ENCODE measurements at regions of chr20 and their contacts with region 1.

Region 1: DNA sequence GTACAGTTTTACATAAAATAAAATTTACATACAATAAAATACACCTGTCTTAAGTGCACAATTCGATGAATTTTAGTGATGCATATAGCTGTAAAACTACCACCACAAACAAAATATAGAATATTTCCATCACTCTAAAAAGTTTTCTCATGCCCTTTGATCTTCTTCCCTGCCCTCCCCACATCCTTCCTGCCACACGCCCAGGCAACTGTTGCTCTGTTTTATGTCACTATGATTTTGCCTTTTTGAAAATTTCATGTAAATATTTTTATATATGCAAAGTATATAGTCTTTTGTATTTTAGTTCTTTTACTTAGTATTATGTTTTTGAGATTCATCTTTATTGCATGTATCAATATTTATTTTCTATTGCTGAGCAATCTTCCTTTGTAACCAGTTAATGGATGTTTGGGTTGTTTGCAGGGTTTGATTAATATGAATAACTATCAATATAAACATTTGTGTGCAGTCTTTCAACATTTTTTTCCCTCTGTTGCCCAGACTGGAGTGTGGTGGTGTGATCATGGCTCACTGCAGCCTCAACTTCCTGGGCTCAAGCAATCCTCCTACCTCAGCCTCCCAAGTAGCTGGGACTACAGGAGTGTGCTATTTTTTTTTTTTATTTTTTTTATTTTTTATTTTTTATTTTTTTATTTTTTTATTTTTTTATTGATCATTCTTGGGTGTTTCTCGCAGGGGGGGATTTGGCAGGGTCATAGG is 23.8 kb upstream of the SAMHD1 start:
- DNase-seq: peak; percentile 32 to 89 (median 60)
- ATAC-seq: peak; percentile 83
- H3K4me3 ChIP-seq: peak overlapping the region; percentile 5
- H3K4me3 Mint-ChIP-seq: peak overlapping the region; percentile 30
- H3K27ac ChIP-seq: peak overlapping the region; percentile 56 to 59
- H3K27ac Mint-ChIP-seq: peak overlapping the region; percentile 79
- H3K4me1 ChIP-seq: peaks cover 51% of the 10 kb centered on the region
- H3K4me1 Mint-ChIP-seq: peaks cover 38% of the 10 kb centered on the region
- H3K27me3 ChIP-seq: no peaks in the 10 kb centered on the region
- H3K27me3 Mint-ChIP-seq: no peaks in the 10 kb centered on the region
- CTCF ChIP-seq: no peak

Region 2: GRCh38 chr20:36745927-36746659 is 229.2 kb before region 1 on chr20 and contains the start of gene NDRG3:
- CTCF ChIA-PET with region 1: no interaction called
- POLR2A ChIA-PET with region 1: no interaction called
- intact Hi-C with region 1: no loop called
- DNase-seq: peak; percentile 84 to 97 (median 91)
- ATAC-seq: peak; percentile 98
- H3K4me3 ChIP-seq: peak within 1 kb of the TSS; percentile 92
- H3K4me3 Mint-ChIP-seq: peak within 1 kb of the TSS; percentile 90
- H3K27ac ChIP-seq: peak within 1 kb of the TSS in 1 of 2 donors; percentile 49
- H3K27ac Mint-ChIP-seq: peak within 1 kb of the TSS; percentile 89
- H3K4me1 ChIP-seq: peaks cover 22% of the 10 kb centered on the region
- H3K4me1 Mint-ChIP-seq: peaks cover 21% of the 10 kb centered on the region
- H3K27me3 ChIP-seq: no peaks in the 10 kb centered on the region
- H3K27me3 Mint-ChIP-seq: no peaks in the 10 kb centered on the region
- CTCF ChIP-seq: no peak
- total RNA-seq, gene NDRG3: 17.3 to 17.5 TPM

Region 3: DNA sequence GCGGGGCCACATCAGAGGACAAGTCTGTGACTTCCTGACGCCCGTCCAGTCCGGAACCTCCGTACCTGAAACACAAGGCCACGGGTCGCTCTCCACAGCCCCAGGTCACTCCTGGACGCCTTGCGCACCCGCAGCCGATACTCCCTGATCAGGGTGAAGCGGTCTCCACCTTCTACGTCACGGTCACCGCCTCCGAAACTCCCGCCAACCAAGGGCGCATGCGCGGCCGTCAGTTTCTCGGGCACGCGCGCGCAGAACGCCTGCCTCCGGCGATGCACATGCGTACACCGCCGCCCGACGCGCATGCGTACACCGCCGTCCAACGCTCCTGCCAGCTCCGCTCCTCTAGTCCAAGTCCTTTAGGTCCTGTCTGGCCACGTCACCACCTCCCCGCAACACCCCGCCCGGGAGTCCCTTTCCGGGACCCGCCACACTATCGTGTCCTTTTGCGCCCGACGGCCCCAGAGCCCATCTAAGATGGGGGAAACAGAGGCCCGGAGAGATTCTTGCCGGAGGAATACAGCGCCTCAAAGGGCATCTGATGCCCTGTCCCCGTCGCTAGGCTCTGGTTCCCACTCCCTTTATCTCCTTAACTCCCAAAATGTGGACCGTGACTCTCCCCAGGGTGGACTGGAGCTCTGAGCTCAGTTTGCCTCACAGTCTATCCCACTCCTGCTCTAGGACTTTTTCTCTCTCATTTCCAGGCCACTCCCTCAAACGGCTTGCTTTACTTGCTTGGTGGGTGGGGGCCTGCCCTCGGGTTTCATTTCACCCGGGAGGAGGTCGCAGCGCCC is 201.5 kb before region 1 on chr20 and contains the start of gene DSN1:
- CTCF ChIA-PET with region 1: no interaction called
- POLR2A ChIA-PET with region 1: no interaction called
- intact Hi-C with region 1: no loop called
- DNase-seq: peak; percentile 95 to 99 (median 98)
- ATAC-seq: peak; percentile 78
- H3K4me3 ChIP-seq: peak within 1 kb of the TSS; percentile 86
- H3K4me3 Mint-ChIP-seq: peak within 1 kb of the TSS; percentile 97
- H3K27ac ChIP-seq: peak within 1 kb of the TSS; percentile 83 to 91
- H3K27ac Mint-ChIP-seq: peak within 1 kb of the TSS; percentile 94
- H3K4me1 ChIP-seq: peaks cover 21% of the 10 kb centered on the region
- H3K4me1 Mint-ChIP-seq: peaks cover 21% of the 10 kb centered on the region
- H3K27me3 ChIP-seq: no peaks in the 10 kb centered on the region
- H3K27me3 Mint-ChIP-seq: no peaks in the 10 kb centered on the region
- CTCF ChIP-seq: no peak
- total RNA-seq, gene DSN1: 10.5 to 14.3 TPM

Region 4: GRCh38 chr20:36988494-36988966 is 13.3 kb after region 1 on chr20:
- CTCF ChIA-PET with region 1: no interaction called
- POLR2A ChIA-PET with region 1: interaction called, 10 read pairs
- intact Hi-C with region 1: no loop called
- DNase-seq: peak in 11 of 14 experiments; percentile 9 to 64 (median 26)
- ATAC-seq: peak; percentile 93
- H3K4me3 ChIP-seq: no peak overlapping the region
- H3K4me3 Mint-ChIP-seq: peak overlapping the region; percentile 26
- H3K27ac ChIP-seq: peak overlapping the region; percentile 23 to 54
- H3K27ac Mint-ChIP-seq: peak overlapping the region; percentile 88
- H3K4me1 ChIP-seq: peaks cover 32% of the 10 kb centered on the region
- H3K4me1 Mint-ChIP-seq: peaks cover 54% of the 10 kb centered on the region
- H3K27me3 ChIP-seq: no peaks in the 10 kb centered on the region
- H3K27me3 Mint-ChIP-seq: no peaks in the 10 kb centered on the region
- CTCF ChIP-seq: no peak

Measured in CD4-positive, alpha-beta T cell (primary cell).